Posterior cingulate gyrus (tissue), 11 donors: ENCODE measurements at regions of chr19 and their contacts with region 1.

Region 1: DNA sequence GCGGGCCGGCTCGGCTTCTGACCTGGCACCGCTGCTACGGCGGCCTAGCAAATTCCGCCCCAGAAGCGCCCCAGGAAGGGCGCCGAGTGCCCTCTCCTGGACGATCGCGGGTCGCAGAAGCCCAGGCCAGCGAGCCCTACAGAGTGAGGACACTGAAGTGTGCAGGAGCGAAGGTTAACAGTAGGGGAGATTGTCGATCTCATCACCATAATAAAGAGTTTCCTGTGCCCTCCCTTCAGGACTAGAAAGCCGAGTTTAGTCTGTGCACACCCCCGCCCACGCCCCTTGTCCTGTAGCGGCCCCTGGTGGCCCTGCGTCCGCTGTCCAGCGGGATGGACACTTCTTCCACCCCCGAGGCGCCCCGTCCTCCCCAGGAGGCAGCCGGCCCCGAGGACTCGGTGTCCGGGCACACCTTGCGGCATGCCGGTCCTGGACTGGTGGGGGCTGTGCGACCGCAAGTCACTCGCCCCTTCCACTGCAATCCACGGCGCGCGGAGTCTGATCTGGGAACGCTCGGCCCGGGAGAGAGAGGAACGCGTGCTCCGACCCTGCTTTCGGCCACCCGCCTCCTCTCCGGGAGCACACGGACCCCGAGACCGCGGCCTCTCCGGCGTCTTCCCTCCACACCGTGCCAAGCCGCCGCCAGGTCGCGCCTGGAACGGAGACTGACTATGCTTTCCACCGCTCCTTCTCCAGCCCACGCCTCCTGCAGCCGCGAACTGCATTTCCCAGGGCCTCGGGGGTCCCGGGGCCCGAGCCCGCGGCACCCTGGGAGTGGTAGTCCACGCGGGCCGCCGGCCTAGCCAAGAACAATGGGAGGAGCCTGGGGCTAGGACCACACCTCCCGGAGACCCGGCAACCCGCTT is 769 bp upstream of the KMT2B start:
- DNase-seq: peak; percentile 83 to 99 (median 94)

Region 2: DNA sequence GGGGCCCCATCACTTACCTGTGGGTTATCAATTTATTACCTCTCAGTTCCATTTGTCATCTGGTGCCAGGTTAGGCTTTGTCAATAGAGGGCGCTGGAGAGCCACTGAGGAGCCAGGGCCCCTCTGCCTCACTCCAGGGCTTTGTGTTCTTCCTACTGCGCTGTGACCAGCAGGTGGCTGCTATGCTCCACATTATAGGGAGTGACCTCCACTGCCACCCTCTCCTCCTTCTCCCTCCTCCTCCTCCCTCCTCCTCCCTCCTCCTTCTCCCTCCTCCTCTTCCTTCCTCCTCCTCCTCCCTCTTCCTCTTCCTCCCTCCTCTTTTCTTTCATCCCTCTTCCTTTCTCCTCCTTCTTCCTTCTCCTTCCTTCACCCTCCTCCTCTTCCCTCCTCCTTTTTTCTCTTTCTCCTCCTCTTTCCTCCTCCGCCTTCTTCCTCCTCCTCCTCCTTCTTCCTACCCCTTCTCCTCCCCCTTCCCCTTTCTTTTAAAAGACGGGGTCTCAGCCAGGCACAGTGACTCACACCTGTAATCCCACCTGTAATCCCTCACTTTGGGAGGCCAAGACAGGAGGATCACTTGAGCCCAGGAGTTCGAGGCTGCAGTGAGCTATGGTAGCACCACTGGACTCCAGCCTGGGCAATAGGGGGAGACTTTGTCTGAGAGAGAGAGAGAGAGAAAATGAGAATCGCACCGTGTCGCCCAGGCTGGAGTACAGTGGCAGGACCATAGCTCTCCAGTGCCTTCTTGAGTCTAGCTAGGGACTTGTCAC is 23.0 kb before region 1 on chr19:
- intact Hi-C with region 1: loop called (anchors 1 kb)
- DNase-seq: peak; percentile 66 to 98 (median 84)

Region 3: DNA sequence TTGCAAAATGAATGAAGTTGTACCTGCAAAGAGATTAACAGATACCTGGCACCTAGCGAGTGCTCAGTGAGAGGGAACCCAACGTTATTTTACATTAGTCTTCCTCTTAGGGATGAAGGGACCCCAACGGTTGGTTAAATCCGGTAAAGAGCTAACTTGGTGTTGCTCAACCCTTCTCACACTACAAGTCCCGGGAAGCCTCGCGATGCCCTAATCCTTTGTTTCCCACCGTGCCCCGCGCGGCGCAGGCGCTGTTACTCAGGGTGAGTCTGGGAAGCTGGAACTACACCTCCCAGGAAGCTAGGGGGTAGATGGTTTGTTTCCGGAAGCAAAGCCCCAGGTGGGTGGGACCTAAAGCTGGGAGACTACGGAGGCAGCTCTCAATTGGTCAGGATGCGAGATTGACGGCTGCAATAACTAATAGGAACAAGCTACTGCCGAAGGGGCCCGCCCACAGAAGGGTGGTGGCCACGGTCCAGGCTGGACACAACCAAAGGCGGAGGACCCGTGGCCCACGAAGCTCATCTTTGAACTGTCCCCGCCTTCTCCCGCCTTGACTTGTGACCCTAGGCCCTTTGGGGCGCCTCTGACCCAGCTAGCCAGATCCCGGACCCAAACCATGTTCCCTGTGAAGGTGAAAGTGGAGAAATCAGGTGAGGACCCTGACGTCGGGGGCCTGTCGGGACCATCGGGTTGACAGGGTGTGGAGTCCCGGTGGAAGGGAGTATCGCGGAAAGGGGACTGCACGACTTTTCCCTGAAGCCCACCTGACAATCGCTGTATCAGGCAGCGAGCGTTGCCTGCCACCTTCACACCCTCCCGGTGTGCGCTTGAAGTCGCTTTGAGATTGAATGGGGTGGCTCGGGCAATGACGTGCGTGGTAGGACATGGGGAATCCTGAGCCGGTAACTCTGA is 31.3 kb after region 1 on chr19 and contains the start of gene LIN37:
- intact Hi-C with region 1: no loop called
- DNase-seq: peak; percentile 99 to 100 (median 100)

Region 4: DNA sequence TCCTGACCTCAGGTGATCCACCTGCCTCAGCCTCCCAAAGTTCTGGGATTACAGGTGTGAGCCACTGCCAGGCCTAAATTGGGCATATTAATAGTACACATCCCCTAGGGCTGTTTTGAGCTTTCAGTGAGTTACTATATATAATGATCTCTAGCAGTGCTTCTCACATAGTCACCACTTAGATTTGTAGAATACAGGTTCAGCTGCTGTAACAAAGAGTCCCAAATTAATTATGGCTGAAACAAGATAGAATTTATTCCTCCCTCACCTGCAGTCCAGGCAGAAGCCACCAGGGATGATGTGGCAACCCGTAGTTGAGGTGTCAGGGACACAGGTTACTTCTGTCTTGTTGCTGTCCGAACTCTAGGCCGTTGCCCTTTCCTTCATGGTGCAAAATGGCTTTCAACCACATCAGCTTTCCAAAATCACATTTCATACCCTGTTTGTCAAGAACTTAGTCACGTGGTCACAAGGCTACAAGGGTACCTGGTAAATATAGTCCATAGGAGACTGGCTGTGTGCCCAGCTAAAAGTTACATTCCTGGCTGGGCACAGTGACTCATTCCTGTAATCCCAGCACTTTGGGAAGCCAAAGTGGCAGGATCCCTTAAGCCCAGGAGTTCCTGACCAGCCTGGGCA is 43.8 kb after region 1 on chr19:
- intact Hi-C with region 1: no loop called
- DNase-seq: no peak